Activated CD4-positive, alpha-beta T cell treated with anti-CD3 and anti-CD28 coated beads for 36 hours (primary cell): ENCODE measurements at regions of chr17 and their contacts with region 1.

Region 1: DNA sequence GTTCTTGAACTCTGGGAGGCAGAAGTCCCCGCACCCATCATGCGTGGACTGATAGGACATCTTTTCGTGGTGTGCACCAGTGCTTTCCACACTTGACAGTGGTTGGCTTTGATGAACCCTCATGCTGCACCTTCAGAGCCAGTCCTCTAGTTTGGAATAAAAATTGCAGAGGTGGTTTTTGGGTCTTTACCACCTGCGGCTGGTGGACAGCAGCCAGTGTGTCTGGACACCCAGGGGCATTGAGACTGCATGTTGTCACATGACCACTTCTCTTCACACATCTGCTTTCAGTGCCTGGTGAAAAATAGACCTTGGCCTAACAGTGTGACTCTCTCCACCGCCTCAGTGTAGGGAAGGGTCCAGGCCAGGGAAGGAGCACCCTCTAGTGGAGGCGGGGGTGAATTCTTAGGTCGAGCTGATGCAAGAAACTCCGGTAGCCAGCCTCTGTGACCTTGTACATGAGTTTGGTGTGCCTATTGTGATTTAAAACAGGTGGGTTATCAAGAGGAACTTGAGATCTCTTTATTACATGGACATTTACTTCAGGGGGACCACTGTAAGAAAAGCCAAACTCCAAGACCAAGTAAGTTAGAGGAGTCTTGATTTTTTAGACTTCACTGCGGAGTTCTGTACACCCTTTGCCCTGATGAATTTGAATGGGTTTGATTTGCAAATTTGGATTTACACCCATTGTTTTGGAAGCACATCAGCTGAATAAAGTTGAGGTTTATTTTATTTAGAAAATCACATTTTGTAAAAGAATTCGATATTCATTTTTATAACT is 17.9 kb downstream of the GOSR2 start:
- DNase-seq: peak; percentile 85
- ATAC-seq: peak; percentile 90
- H3K4me3 Mint-ChIP-seq: no peak overlapping the region
- H3K27ac Mint-ChIP-seq: peak overlapping the region; percentile 76
- H3K4me1 Mint-ChIP-seq: peaks cover 18% of the 10 kb centered on the region
- H3K27me3 Mint-ChIP-seq: no peaks in the 10 kb centered on the region

Region 2: GRCh38 chr17:46770818-46771560 is 169.8 kb before region 1 on chr17:
- CTCF ChIA-PET with region 1: no interaction called
- POLR2A ChIA-PET with region 1: no interaction called
- intact Hi-C with region 1: no loop called
- DNase-seq: peak; percentile 59
- ATAC-seq: peak; percentile 62
- H3K4me3 Mint-ChIP-seq: peak overlapping the region; percentile 38
- H3K27ac Mint-ChIP-seq: no peak overlapping the region
- H3K4me1 Mint-ChIP-seq: peaks cover 5% of the 10 kb centered on the region
- H3K27me3 Mint-ChIP-seq: peaks cover 20% of the 10 kb centered on the region

Region 3: GRCh38 chr17:46836500-46836899 is 104.3 kb before region 1 on chr17:
- CTCF ChIA-PET with region 1: interaction called, 36 read pairs
- POLR2A ChIA-PET with region 1: no interaction called
- intact Hi-C with region 1: no loop called
- DNase-seq: no peak
- ATAC-seq: no peak
- H3K4me3 Mint-ChIP-seq: no peak overlapping the region
- H3K27ac Mint-ChIP-seq: no peak overlapping the region
- H3K4me1 Mint-ChIP-seq: peaks cover 6% of the 10 kb centered on the region
- H3K27me3 Mint-ChIP-seq: peaks cover 17% of the 10 kb centered on the region

Region 4: DNA sequence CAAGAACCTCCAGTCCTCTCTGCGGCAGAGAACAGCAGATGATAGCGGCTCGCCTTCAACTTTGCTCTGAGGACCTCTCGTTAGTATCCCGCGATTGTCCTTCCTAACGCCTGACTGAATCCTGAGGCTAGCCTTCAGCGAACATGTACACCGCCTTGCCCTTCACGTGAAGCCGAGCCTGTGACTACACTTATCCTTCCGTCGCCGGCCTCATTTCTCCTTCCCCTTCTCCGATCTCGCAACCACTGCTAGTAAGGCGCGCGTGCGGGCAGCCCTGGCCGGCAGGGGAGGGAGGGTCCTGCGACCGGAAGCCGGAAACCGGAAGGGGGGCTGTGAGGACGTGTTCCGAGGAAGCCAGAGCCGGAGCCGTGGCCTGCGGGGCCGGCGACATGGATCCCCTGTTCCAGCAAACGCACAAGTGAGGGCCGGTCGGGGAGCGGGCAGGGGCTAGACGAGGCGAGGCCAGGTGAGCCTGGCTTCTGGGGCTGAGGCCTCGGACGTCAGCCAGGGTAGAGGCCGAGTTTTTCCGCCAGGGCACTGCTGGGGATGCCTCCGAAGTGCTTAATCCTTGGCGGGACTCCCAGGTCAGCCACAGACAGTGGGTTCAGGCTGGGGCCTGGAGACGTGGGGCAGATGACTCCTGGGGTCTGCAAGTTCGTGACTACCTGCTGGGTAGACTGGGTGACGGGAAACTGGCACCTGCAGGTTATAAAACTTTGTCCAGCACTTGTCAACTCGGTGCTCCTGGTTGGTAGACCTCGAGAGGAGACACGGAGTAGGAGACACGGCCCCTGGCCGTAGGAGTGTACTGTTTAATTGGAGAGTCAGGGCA is 17.8 kb before region 1 on chr17 and contains the start of gene GOSR2:
- CTCF ChIA-PET with region 1: interaction called, 5 read pairs
- POLR2A ChIA-PET with region 1: no interaction called
- intact Hi-C with region 1: loop called in 1 of 2 experiments (anchors 1 kb)
- DNase-seq: peak; percentile 94
- ATAC-seq: peak; percentile 96
- H3K4me3 Mint-ChIP-seq: peak within 1 kb of the TSS; percentile 81
- H3K27ac Mint-ChIP-seq: peak within 1 kb of the TSS; percentile 100
- H3K4me1 Mint-ChIP-seq: peaks cover 44% of the 10 kb centered on the region
- H3K27me3 Mint-ChIP-seq: no peaks in the 10 kb centered on the region
- total RNA-seq, gene GOSR2: 38.9 to 42.7 TPM

Region 5: DNA sequence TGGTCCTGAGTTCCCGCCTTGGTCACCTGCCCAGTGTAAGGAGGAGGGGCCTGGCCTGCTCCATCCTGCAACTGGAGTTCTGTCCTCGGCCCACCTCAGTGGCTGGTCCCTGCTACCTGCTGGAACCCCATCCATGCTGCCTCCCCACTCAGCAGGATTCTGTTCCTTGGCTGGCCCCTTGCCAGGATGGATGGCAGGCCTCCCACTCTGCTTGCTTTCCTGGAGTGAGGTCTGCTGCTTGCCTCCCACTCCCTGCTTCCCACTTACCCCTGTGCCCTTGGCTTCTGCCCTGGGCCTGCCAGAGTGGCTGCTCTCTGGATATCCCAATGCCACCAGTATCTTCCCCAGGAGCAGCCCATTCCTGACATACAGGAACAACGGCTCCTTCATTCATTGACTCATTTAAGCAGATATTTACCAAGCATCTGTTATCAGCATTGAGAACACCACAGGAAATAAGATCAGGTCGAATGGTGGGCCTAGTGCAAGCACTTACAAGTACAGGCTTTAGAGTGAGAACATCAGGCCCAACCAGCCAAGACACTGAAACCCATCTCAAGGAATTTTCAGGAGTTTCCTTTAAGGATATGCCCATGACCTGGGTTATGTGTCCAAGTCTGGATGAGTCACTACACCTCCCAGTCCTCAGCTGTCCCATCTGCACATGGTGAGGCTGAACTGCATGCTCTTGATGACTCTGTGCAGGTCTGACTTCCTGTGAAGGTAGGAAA is 55.2 kb after region 1 on chr17:
- CTCF ChIA-PET with region 1: interaction called, 5 read pairs
- POLR2A ChIA-PET with region 1: no interaction called
- intact Hi-C with region 1: loop called (anchors 1 to 5 kb)
- DNase-seq: no peak
- ATAC-seq: no peak
- H3K4me3 Mint-ChIP-seq: no peak overlapping the region
- H3K27ac Mint-ChIP-seq: no peak overlapping the region
- H3K4me1 Mint-ChIP-seq: no peaks in the 10 kb centered on the region
- H3K27me3 Mint-ChIP-seq: no peaks in the 10 kb centered on the region

Region 6: DNA sequence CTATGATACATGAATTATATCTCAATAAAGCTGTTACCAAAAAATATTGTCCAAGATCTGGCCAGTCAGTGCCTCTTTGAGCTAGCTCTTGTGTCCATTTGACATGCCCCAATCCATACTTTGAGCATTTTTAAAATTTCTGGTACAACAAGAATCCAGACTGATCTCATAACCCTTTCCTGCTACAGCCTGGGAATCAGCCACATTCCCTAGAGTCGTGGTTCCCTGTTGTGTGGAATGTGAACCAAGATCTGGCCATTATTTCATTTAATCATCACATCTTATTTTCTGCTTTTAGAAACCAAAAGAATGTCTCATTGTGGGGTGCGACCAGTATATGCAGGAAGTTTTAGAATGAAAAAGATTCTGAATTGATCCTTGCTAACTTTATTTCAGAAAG is 72.5 kb after region 1 on chr17:
- CTCF ChIA-PET with region 1: no interaction called
- POLR2A ChIA-PET with region 1: no interaction called
- intact Hi-C with region 1: no loop called
- DNase-seq: no peak
- ATAC-seq: no peak
- H3K4me3 Mint-ChIP-seq: no peak overlapping the region
- H3K27ac Mint-ChIP-seq: no peak overlapping the region
- H3K4me1 Mint-ChIP-seq: peaks cover 9% of the 10 kb centered on the region
- H3K27me3 Mint-ChIP-seq: no peaks in the 10 kb centered on the region

Region 7: DNA sequence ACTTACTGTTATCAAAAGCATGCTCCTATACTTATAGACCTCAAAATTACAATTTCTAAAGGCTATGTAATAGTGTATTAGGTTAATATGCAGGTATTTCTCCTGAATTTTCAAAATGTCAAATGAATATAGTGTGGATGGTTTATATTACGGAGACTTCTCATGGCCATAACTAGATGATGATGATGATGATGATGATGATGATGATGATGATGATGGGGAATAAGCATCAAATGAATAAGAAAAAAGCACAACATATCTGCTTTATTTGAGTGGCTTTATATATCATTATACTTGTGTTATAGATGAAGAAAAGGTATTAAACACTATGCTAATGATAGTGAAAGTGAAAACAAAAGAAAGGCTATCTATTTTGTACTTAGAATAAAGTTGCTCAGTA is 194.4 kb after region 1 on chr17:
- CTCF ChIA-PET with region 1: interaction called, 4 read pairs
- POLR2A ChIA-PET with region 1: no interaction called
- intact Hi-C with region 1: loop called in 1 of 2 experiments (anchors 5 kb)
- DNase-seq: no peak
- ATAC-seq: no peak
- H3K4me3 Mint-ChIP-seq: no peak overlapping the region
- H3K27ac Mint-ChIP-seq: no peak overlapping the region
- H3K4me1 Mint-ChIP-seq: no peaks in the 10 kb centered on the region
- H3K27me3 Mint-ChIP-seq: no peaks in the 10 kb centered on the region